ENCODE measurements at regions of chr7 and their contacts with region 1.

Region 1: DNA sequence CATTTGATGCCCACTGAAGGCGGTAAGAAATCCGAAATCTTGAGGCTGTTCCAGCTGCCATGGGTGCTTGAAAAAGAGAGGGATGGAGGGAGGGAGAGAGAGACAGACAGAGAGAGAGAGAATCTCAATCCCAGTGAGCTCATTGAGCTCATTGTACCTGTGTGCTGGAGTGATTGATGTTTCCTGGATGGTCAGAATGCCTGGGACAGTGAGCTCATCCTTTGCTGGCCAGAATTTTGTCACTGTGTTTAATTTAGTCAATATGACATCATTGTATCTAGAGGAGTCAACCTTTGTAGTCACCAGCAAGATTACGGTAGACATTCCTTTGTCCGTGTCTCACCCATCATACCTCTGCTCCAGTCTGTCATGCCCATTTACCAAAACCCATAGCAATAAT is 625.4 kb upstream of the POM121L12 start:
- DNase-seq: no peak
- H3K4me3 ChIP-seq: no peak overlapping the region
- H3K27ac ChIP-seq: no peak overlapping the region
- H3K4me1 ChIP-seq: no peaks in the 10 kb centered on the region
- H3K27me3 ChIP-seq: no peaks in the 10 kb centered on the region
- CTCF ChIP-seq: no peak

Region 2: DNA sequence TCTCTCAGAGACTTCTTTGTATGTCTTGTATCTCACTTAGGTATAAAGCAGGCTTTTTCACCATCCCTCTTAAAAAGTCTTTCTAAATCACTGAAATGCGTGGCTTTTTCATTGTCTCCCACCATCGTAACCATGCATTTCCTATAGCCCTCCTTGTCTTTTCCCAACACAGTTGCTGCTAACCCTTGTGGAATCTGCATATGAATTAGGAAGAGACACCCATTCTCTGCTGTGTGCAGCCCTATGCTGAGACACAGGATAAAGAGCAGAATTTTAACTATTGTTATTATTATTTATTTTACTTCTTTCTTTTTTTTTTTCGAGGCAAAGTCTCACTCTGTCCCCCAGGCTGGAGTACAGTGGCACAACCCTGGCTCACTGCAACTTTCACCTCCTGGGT is 289.1 kb before region 1 on chr7:
- CTCF ChIA-PET with region 1: no interaction called
- POLR2A ChIA-PET with region 1: interaction called, 26 read pairs
- intact Hi-C with region 1: no loop called
- DNase-seq: no peak
- H3K4me3 ChIP-seq: no peak overlapping the region
- H3K27ac ChIP-seq: no peak overlapping the region
- H3K4me1 ChIP-seq: no peaks in the 10 kb centered on the region
- H3K27me3 ChIP-seq: 0 out of 2 replicates have a peak, but pooled peaks cover under 1% of the 10 kb centered on the region
- CTCF ChIP-seq: no peak